ENCODE measurements at regions of chr19 and their contacts with region 1.

Region 1: GRCh38 chr19:55461259-55461973 is at the start of gene ISOC2:
- DNase-seq: peak; percentile 100
- H3K4me3 Mint-ChIP-seq: peak within 1 kb of the TSS; percentile 85
- H3K27ac Mint-ChIP-seq: peak within 1 kb of the TSS; percentile 73
- H3K4me1 Mint-ChIP-seq: peaks cover 16% of the 10 kb centered on the region
- H3K27me3 Mint-ChIP-seq: no peaks in the 10 kb centered on the region
- total RNA-seq, gene ISOC2: 30.4 and 34.8 TPM in 2 replicates

Region 2: GRCh38 chr19:55407800-55408532 is 53.5 kb before region 1 on chr19:
- intact Hi-C with region 1: loop called (anchors 1 kb)
- DNase-seq: peak; percentile 98
- H3K4me3 Mint-ChIP-seq: peak overlapping the region; percentile 93
- H3K27ac Mint-ChIP-seq: peak overlapping the region; percentile 97
- H3K4me1 Mint-ChIP-seq: peaks cover 22% of the 10 kb centered on the region
- H3K27me3 Mint-ChIP-seq: peaks cover 4% of the 10 kb centered on the region

Region 3: GRCh38 chr19:55437410-55438075 is 23.9 kb before region 1 on chr19:
- intact Hi-C with region 1: no loop called
- DNase-seq: no peak
- H3K4me3 Mint-ChIP-seq: no peak overlapping the region
- H3K27ac Mint-ChIP-seq: no peak overlapping the region
- H3K4me1 Mint-ChIP-seq: peaks cover 10% of the 10 kb centered on the region
- H3K27me3 Mint-ChIP-seq: peaks cover 39% of the 10 kb centered on the region

Region 4: GRCh38 chr19:55476100-55476775 is 14.8 kb after region 1 on chr19 and contains the start of gene ZNF628:
- intact Hi-C with region 1: loop called (anchors 1 kb)
- DNase-seq: peak; percentile 96
- H3K4me3 Mint-ChIP-seq: peak within 1 kb of the TSS; percentile 88
- H3K27ac Mint-ChIP-seq: peak within 1 kb of the TSS; percentile 90
- H3K4me1 Mint-ChIP-seq: peaks cover 20% of the 10 kb centered on the region
- H3K27me3 Mint-ChIP-seq: no peaks in the 10 kb centered on the region
- total RNA-seq, gene ZNF628: 8.6 and 9.5 TPM in 2 replicates